ENCODE measurements at regions of chr3 and their contacts with region 1.

Region 1: DNA sequence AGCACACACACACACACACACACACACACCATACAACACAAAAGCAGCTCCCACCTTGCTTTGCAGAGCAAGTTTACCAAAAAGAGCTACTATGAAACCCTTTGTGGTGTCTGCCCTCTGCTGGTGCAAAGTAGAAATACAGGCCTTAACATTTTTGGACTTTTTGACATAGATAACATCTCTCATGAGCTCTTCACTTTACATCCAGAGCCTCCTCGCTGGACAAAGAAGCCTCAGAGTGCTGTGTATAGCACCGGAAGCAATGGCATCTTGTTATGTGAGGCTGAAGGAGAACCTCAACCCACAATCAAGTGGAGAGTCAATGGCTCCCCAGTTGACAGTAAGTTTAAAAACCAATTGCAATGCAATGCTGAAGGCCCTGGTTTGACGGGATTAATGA is 157.9 kb downstream of the CHL1 start:
- DNase-seq: peak; percentile 80
- ATAC-seq: peak; percentile 62
- H3K4me3 ChIP-seq: no peak overlapping the region
- H3K4me3 Mint-ChIP-seq: no peak overlapping the region
- H3K27ac ChIP-seq: no peak overlapping the region
- H3K27ac Mint-ChIP-seq: peak overlapping the region; percentile 7
- H3K4me1 ChIP-seq: peaks cover 14 to 16% of the 10 kb centered on the region in 2 donors
- H3K4me1 Mint-ChIP-seq: peaks cover 15% of the 10 kb centered on the region
- H3K27me3 ChIP-seq: no peaks in the 10 kb centered on the region
- H3K27me3 Mint-ChIP-seq: no peaks in the 10 kb centered on the region
- CTCF ChIP-seq: peak; percentile 85

Region 2: DNA sequence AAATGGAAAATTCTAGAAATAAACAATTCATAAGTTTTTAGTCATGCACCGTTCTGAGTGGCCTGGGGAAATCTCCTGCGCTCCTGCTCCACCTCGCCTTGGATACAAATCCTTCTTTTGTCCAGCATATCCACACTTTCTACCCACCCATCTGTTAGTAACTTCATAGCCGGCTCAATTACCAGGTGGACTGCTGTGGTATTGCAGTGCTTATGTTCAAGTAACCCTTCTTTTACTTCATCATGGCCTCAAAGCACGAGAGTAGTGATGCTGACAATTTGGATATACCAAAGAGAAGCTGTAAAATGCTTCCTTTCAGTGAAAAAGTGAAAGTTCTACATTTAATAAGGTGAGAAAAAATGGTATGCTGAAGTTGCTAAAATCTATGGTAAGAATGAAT is 300.2 kb before region 1 on chr3:
- CTCF ChIA-PET with region 1: interaction called, 27 read pairs
- POLR2A ChIA-PET with region 1: no interaction called
- intact Hi-C with region 1: no loop called
- DNase-seq: no peak
- ATAC-seq: no peak
- H3K4me3 ChIP-seq: no peak overlapping the region
- H3K4me3 Mint-ChIP-seq: no peak overlapping the region
- H3K27ac ChIP-seq: no peak overlapping the region
- H3K27ac Mint-ChIP-seq: no peak overlapping the region
- H3K4me1 ChIP-seq: no peaks in the 10 kb centered on the region
- H3K4me1 Mint-ChIP-seq: no peaks in the 10 kb centered on the region
- H3K27me3 ChIP-seq: peaks cover 0 to 2% (median 0%) of the 10 kb centered on the region in 4 experiments
- H3K27me3 Mint-ChIP-seq: peaks cover 1% of the 10 kb centered on the region
- CTCF ChIP-seq: no peak

Region 3: GRCh38 chr3:212432-212831 is 142.0 kb before region 1 on chr3:
- CTCF ChIA-PET with region 1: interaction called, 5 read pairs
- POLR2A ChIA-PET with region 1: no interaction called
- intact Hi-C with region 1: loop called (anchors 5 kb)
- DNase-seq: peak; percentile 80
- ATAC-seq: peak; percentile 76
- H3K4me3 ChIP-seq: no peak overlapping the region
- H3K4me3 Mint-ChIP-seq: peak overlapping the region; percentile 57
- H3K27ac ChIP-seq: peak overlapping the region; percentile 22 to 55
- H3K27ac Mint-ChIP-seq: peak overlapping the region; percentile 82
- H3K4me1 ChIP-seq: peaks cover 16% of the 10 kb centered on the region in 2 donors
- H3K4me1 Mint-ChIP-seq: peaks cover 17% of the 10 kb centered on the region
- H3K27me3 ChIP-seq: no peaks in the 10 kb centered on the region
- H3K27me3 Mint-ChIP-seq: no peaks in the 10 kb centered on the region
- CTCF ChIP-seq: no peak

Region 4: GRCh38 chr3:278300-279064 is 76.0 kb before region 1 on chr3:
- CTCF ChIA-PET with region 1: interaction called, 11 read pairs
- POLR2A ChIA-PET with region 1: interaction called, 3 read pairs
- intact Hi-C with region 1: loop called (anchors 2 kb)
- DNase-seq: peak; percentile 93
- ATAC-seq: peak; percentile 94
- H3K4me3 ChIP-seq: peak overlapping the region in 4 of 5 experiments; percentile 9 to 54 (median 39)
- H3K4me3 Mint-ChIP-seq: peak overlapping the region; percentile 75
- H3K27ac ChIP-seq: peak overlapping the region; percentile 98 to 99
- H3K27ac Mint-ChIP-seq: peak overlapping the region; percentile 94
- H3K4me1 ChIP-seq: peaks cover 60 to 62% of the 10 kb centered on the region in 2 donors
- H3K4me1 Mint-ChIP-seq: peaks cover 60% of the 10 kb centered on the region
- H3K27me3 ChIP-seq: no peaks in the 10 kb centered on the region
- H3K27me3 Mint-ChIP-seq: no peaks in the 10 kb centered on the region
- CTCF ChIP-seq: no peak

Region 5: DNA sequence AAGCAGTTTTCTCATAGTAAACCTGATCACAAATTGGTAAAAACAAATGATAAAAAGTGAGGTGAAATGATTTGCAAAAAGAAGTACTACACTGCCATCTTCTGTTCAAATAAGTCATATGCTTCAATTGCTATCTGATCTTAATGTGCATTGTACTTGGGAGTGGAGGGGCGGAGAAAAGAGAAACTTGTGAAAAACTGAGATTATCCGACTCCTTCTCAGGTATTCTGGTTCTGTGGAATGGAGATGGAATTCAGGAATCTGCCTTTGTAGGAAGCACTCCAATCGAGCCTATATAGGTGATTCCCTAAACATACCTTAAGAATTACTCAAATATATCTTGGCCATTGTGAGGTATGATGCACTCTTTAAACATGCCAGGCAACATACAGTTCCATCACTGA is 22.7 kb after region 1 on chr3:
- CTCF ChIA-PET with region 1: interaction called, 22 read pairs
- POLR2A ChIA-PET with region 1: no interaction called
- intact Hi-C with region 1: loop called (anchors 1 kb)
- DNase-seq: peak; percentile 65
- ATAC-seq: no peak
- H3K4me3 ChIP-seq: no peak overlapping the region
- H3K4me3 Mint-ChIP-seq: no peak overlapping the region
- H3K27ac ChIP-seq: no peak overlapping the region
- H3K27ac Mint-ChIP-seq: no peak overlapping the region
- H3K4me1 ChIP-seq: no peaks in the 10 kb centered on the region
- H3K4me1 Mint-ChIP-seq: no peaks in the 10 kb centered on the region
- H3K27me3 ChIP-seq: no peaks in the 10 kb centered on the region
- H3K27me3 Mint-ChIP-seq: peaks cover 7% of the 10 kb centered on the region
- CTCF ChIP-seq: peak; percentile 80

Region 6: DNA sequence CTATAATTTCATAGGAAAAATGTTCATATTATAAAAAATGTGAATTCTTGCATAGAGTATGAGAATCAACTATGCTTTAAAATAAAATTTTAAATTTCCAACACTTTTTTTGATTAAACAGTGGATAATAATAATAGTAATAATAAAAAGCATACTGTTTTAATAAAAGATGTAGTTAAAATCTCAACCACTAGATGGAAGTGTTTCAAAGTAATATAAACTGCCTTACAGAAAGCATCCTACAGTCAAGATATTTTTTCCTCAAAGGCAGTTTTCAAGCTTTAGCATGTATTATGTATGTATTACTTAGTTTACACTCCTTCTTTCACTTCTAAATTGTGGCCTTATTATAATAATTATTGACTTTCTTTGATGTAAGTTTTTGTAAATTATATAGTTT is 59.6 kb after region 1 on chr3:
- CTCF ChIA-PET with region 1: no interaction called
- POLR2A ChIA-PET with region 1: no interaction called
- intact Hi-C with region 1: no loop called
- DNase-seq: peak; percentile 10
- ATAC-seq: no peak
- H3K4me3 ChIP-seq: no peak overlapping the region
- H3K4me3 Mint-ChIP-seq: no peak overlapping the region
- H3K27ac ChIP-seq: no peak overlapping the region
- H3K27ac Mint-ChIP-seq: no peak overlapping the region
- H3K4me1 ChIP-seq: no peaks in the 10 kb centered on the region
- H3K4me1 Mint-ChIP-seq: no peaks in the 10 kb centered on the region
- H3K27me3 ChIP-seq: no peaks in the 10 kb centered on the region
- H3K27me3 Mint-ChIP-seq: peaks cover 9% of the 10 kb centered on the region
- CTCF ChIP-seq: peak; percentile 75

Region 7: DNA sequence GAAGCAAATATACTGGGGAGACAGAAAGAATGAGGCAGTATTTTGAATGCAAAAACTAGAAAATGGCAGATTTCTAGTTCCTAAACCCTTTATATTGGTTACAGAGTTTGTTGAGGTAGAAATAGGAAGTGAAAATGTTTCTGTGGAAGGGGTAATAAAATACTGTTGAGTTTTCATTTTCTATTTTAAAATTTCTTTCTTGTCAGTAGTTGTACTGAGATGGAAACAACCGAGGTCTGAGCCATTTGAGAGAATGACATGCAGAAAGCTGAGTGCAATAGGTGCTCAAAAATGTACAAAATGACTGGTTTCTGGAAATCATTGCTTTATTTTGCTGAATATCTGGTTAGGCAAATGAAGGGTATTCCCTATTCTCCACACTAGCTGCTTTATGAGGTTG is 203.5 kb after region 1 on chr3:
- CTCF ChIA-PET with region 1: no interaction called
- POLR2A ChIA-PET with region 1: no interaction called
- intact Hi-C with region 1: no loop called
- DNase-seq: no peak
- ATAC-seq: peak; percentile 17
- H3K4me3 ChIP-seq: no peak overlapping the region
- H3K4me3 Mint-ChIP-seq: peak overlapping the region; percentile 21
- H3K27ac ChIP-seq: no peak overlapping the region
- H3K27ac Mint-ChIP-seq: no peak overlapping the region
- H3K4me1 ChIP-seq: peaks cover 0 to 2% of the 10 kb centered on the region in 2 donors
- H3K4me1 Mint-ChIP-seq: peaks cover 9% of the 10 kb centered on the region
- H3K27me3 ChIP-seq: no peaks in the 10 kb centered on the region
- H3K27me3 Mint-ChIP-seq: no peaks in the 10 kb centered on the region
- CTCF ChIP-seq: no peak

Measured in B cell (primary cell).